Thyroid gland (tissue), 4 donors: ENCODE measurements at regions of chr6 and their contacts with region 1.

Region 1: GRCh38 chr6:85353012-85353411 is 96.9 kb upstream of the NT5E start:
- DNase-seq: no peak
- H3K4me3 ChIP-seq: no peak overlapping the region
- H3K27ac ChIP-seq: no peak overlapping the region
- H3K4me1 ChIP-seq: no peaks in the 10 kb centered on the region
- H3K27me3 ChIP-seq: no peaks in the 10 kb centered on the region
- CTCF ChIP-seq: no peak
- POLR2A ChIP-seq: no peak

Region 2: DNA sequence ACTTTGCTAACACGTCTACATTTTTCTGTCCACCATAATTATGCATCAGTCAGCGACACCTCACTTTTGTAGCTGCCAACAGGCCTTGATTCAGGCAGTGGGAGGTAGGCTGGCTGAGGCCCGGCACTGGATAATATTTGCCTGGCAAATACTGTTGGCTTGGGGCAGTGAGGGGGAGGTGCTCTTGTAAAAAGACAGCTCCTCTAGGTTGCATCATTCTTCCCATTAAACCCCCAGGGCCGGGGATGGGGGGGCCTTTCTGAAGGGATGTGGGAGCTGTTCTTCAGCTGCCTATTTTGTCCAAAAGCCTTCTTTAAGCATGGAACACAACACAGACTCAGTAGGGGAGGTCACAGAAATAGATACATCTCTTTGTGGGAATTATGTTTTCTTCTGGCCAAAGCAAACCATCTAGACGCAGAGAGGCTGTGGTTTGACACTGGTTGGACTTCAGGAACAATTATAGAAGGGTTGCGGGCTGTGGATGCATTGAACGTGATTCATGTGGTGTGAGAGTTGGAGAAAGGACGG is 241.5 kb before region 1 on chr6:
- intact Hi-C with region 1: no loop called
- DNase-seq: no peak
- H3K4me3 ChIP-seq: no peak overlapping the region
- H3K27ac ChIP-seq: no peak overlapping the region
- H3K4me1 ChIP-seq: no peaks in the 10 kb centered on the region
- H3K27me3 ChIP-seq: no peaks in the 10 kb centered on the region
- CTCF ChIP-seq: no peak
- POLR2A ChIP-seq: no peak

Region 3: DNA sequence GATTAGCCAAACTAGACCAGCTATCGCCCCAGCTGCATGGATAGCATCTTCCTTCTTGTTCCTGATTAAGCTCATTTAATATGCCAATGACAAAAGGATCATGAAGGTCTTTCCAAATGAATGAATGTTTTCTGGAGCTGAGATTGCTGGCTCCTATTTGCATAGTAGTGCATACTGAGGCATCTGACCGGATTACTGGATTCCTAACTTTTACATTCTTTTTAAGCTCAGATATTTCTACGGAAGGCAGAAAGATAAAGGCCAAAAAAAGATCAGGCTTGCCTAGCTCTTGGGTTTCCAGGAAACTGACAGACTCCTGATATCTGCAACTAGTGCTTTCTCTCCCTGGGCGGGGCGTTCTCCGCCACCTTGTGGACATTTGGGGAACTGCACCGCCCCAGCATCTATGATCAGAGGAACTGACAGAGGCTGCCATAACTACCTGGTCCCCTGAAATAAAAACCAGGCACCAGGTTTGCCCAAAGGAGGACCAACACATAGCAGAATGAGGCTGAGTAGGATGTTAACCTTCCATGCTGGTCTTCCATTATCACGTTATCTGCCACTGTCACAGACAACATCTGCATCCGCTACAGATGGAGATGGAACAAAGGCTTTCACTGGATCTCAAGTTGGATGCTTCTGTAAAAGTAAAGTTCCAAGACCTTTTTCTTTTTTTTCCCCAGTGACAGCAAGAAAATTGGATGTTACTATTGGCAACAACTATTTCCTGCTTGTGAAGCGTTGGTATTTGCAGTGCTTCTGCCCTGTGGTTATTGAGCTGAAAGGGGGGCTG is 130.1 kb after region 1 on chr6:
- intact Hi-C with region 1: loop called (anchors 2 kb)
- DNase-seq: peak; percentile 79 to 84
- H3K4me3 ChIP-seq: no peak overlapping the region
- H3K27ac ChIP-seq: no peak overlapping the region
- H3K4me1 ChIP-seq: peaks cover 0 to 10% of the 10 kb centered on the region in 2 donors
- H3K27me3 ChIP-seq: no peaks in the 10 kb centered on the region
- CTCF ChIP-seq: peak; percentile 96 to 100 (median 98)
- POLR2A ChIP-seq: no peak

Region 4: GRCh38 chr6:85678602-85679444 is 325.8 kb after region 1 on chr6:
- intact Hi-C with region 1: no loop called
- DNase-seq: peak; percentile 98 to 99
- H3K4me3 ChIP-seq: peak overlapping the region; percentile 88 to 95 (median 95)
- H3K27ac ChIP-seq: peak overlapping the region; percentile 79 to 91 (median 91)
- H3K4me1 ChIP-seq: peaks cover 12 to 15% of the 10 kb centered on the region in 2 donors
- H3K27me3 ChIP-seq: no peaks in the 10 kb centered on the region
- CTCF ChIP-seq: peak in 1 of 6 experiments; percentile 23
- POLR2A ChIP-seq: peak; percentile 99 to 100